Dorsolateral prefrontal cortex (tissue), 120 donors: ENCODE measurements at regions of chr18 and their contacts with region 1.

Region 1: DNA sequence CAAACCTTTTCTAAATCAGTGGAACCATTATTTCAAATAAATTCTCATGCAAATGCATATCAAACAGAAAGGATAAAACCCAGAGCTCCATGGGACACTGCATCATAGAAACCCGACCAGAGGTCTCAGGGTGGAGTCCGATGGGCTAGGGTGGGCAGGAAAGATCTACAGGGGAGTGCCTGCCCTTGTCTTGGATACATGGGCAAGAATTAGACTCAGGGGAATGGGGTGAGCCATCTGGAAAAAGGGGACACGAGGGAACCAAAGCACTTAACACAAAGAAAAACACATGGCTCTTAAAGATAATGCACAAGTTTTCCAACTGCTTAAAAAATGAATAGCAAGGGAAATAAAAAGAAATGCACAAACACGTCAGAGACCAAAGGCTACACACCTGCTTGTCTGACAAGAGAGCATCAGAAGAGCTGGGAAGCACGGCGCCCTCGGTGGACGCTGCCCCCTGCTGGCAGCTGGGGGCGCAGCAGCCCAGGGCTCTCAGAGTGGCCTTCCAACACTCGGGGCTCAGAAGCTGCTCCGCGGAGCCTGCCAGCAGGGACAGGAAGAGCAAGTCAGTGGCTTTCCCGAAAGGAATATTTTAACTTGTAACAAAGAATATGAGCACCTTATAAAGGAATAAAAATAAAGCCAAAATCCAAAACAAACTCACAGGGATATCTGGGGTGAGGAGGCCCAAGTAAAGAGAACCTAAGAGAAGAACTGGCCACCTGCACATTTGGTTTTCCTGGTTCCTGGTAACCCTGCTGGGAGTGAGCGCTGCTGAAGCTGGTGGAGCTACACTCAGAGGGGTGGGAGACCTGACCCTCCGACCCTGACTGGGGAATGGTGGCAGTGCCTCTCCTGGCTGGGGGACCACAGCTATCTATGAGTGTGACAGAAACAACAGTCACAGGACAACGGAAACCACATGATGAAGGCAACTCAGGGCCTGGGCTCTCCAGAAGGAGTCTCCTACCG is 54.5 kb downstream of the SIGLEC15 start:
- DNase-seq: peak; percentile 33 to 80 (median 50)
- H3K4me3 ChIP-seq: no peak overlapping the region
- H3K27ac ChIP-seq: no peak overlapping the region
- H3K27me3 ChIP-seq: no peaks in the 10 kb centered on the region
- CTCF ChIP-seq: peak; percentile 77 to 99 (median 97)

Region 2: GRCh38 chr18:45664824-45665763 is 214.9 kb before region 1 on chr18:
- intact Hi-C with region 1: loop called in 1 of 2 experiments (anchors 10 kb)
- DNase-seq: peak in 8 of 10 donors; percentile 38 to 79 (median 62)
- H3K4me3 ChIP-seq: no peak overlapping the region
- H3K27ac ChIP-seq: no peak overlapping the region
- H3K27me3 ChIP-seq: no peaks in the 10 kb centered on the region
- CTCF ChIP-seq: peak; percentile 51 to 93 (median 88)

Region 3: DNA sequence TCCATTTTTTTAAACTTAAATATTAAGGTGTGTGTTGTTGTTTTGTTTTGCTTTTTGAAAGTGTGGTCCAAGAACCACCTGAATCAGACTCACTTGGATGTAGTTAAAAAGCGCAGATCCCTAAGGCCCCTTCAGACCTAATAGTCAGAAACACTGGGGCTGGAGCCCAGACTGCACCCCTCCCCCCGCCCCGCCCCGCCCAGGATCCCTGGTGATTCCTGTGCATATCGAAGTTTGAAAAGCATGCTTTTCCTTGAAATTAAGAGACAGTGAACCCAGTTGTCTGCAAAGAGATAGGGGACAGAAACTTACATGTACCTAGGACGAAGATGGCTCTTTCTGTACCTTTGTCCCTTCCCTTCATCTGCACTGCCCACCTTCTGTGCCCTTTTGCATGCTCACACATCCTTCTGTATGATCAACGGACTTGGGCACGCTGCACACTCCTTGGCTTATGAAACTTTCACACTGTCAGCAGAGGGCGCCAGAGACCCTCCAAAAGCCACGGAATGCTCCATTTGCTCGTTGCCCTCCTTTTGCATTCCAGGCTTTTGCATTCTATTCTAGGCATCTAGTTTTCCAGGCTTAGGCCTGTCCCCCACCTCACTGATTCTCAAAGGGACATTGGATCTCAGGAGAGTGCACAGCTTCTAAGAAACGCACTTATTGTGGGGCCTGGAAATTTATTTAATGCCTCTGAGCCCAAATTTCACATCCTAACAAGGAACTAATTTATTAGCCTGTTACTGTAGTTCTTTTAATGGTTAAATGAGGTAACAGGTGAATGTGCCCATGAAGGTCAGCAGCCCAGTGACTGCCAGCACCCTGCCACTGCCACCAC is 188.8 kb before region 1 on chr18:
- intact Hi-C with region 1: loop called (anchors 2 to 5 kb)
- DNase-seq: peak in 9 of 10 donors; percentile 60 to 85 (median 76)
- H3K4me3 ChIP-seq: no peak overlapping the region
- H3K27ac ChIP-seq: no peak overlapping the region
- H3K27me3 ChIP-seq: no peaks in the 10 kb centered on the region
- CTCF ChIP-seq: peak; percentile 49 to 96 (median 85)

Region 4: DNA sequence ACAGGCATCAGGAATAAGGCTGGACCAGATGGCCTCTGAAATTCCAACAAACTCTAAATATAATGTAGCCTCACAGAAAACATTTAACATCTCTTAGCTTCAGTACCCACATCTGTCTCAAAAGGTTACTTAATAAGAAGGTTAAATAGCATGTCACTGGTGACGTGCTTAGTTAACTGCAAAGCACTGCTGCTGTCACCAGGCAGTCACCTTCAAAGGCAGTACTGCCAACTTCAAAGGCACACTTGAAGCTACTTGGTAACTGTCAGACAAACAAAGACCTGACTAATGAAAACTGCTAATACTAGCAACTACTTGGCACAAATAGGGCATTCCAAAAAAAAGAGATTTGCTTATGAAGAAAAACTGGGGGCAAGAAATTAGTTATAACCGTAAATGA is 51.0 kb after region 1 on chr18:
- intact Hi-C with region 1: loop called in 1 of 2 experiments (anchors 2 kb)
- DNase-seq: no peak
- H3K4me3 ChIP-seq: no peak overlapping the region
- H3K27ac ChIP-seq: no peak overlapping the region
- H3K27me3 ChIP-seq: no peaks in the 10 kb centered on the region
- CTCF ChIP-seq: no peak